Esophagus muscularis mucosa (tissue), 4 donors: ENCODE measurements at regions of chr13 and their contacts with region 1.

Region 1: DNA sequence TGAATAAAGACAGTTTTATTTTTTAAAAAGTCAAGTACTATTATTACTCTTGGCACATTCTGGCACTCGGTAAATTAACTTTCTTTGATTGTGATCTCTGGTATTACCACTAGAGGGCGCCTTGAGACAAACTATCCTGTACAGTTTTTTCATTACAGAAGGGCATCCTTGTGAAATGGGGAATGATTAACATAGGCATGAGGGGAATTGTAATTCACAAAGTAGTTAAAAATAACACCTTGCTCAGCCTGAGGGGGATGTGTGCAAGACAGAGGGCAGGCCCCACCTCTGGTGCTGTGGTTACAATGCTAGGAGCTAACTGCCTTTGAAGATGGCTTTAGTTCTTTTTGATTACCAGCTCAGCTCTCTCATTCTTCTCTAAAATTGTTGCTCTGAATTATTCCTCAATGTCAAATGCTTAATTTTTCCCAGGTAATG is 24.2 kb upstream of the C1QTNF9B start:
- DNase-seq: no peak
- H3K4me3 ChIP-seq: no peak overlapping the region
- H3K27ac ChIP-seq: no peak overlapping the region
- H3K4me1 ChIP-seq: no peaks in the 10 kb centered on the region
- H3K27me3 ChIP-seq: no peaks in the 10 kb centered on the region
- CTCF ChIP-seq: peak; percentile 39 to 59 (median 57)
- EP300 ChIP-seq: no peak
- POLR2A ChIP-seq: no peak

Region 2: GRCh38 chr13:23845105-23845725 is 76.3 kb before region 1 on chr13:
- intact Hi-C with region 1: no loop called
- DNase-seq: no peak
- H3K4me3 ChIP-seq: no peak overlapping the region
- H3K27ac ChIP-seq: no peak overlapping the region
- H3K4me1 ChIP-seq: peaks cover 0 to 18% (median 12%) of the 10 kb centered on the region in 4 donors
- H3K27me3 ChIP-seq: no peaks in the 10 kb centered on the region
- CTCF ChIP-seq: no peak
- EP300 ChIP-seq: no peak
- POLR2A ChIP-seq: no peak

Region 3: DNA sequence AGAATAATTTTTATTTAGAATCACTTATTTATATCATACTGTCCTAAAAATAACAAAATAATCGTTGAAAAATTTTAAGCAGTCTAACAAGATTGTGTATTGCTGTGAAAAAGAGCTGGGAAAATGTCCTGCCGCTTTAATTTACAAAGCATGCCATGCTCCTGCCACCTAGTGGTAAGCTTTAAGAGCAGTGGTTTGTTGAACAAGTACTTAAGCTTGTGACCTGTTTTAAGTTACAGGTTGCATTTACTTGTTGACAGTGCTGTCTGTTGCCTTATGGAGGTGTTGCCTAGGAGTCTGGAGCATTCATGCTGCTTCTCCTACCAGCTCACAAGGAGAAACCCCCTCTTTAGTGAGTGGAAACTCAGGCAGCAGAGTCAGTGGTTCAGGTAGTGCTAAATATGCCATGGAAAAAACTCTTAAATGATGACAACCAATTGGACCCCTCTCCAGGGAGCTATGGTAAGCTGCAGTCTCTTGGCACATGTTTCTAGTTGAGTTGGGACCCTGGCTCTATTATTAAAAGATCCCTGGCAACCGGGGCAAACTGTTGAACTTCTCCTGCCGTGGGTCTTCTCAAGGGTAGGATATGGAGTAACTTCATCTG is 307.5 kb after region 1 on chr13:
- intact Hi-C with region 1: loop called (anchors 5 kb)
- DNase-seq: no peak
- H3K4me3 ChIP-seq: no peak overlapping the region
- H3K27ac ChIP-seq: no peak overlapping the region
- H3K4me1 ChIP-seq: peaks cover 7 to 19% (median 13%) of the 10 kb centered on the region in 4 donors
- H3K27me3 ChIP-seq: no peaks in the 10 kb centered on the region
- CTCF ChIP-seq: peak; percentile 60 to 81 (median 68)
- EP300 ChIP-seq: no peak
- POLR2A ChIP-seq: no peak